Activated CD4-positive, alpha-beta memory T cell treated with anti-CD3 and anti-CD28 coated beads, Interleukin-2, amount 10 ng/mL, durations not matched to agents 7 days and 5 days (primary cell): ENCODE measurements at regions of chr10 and their contacts with region 1.

Region 1: DNA sequence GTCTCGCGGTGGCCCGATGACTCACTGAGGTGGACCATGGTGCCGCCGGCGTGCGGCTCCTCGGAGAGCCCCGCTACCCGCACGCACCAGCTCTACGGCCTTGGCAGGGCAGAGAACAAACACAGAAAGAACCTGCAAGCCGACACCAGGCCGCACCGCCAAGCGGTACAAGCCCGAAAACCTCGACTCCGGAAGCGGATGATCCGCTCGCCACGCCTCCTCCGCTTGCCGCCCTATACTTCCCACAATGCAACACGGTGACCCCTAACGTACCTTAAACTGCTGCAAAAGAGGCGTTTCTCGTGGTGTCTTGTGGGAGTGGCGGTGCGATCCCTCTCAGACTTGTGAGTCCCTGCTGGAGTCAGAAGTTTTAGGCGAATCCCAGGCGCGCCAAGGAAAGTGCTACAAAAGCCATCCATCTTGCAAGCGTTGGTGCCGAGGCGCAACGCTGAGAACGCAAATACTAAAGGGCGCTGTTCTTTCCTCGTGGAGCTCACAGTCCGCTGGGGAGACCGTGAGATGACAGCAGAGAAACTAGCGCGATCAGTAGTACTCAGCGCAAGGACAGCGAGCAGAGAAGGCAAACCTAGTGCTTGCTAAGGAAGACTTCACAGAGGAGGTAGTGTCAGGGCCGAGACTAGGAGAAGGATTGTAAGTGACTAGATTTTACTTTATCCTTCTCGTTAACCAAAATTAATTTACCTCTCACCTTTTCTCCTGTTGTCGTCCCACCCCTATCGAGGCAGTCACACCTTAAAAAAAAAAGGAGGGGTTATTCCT is at the start of gene MRPS16:
- DNase-seq: peak; percentile 95
- H3K4me3 Mint-ChIP-seq: peak within 1 kb of the TSS; percentile 99
- H3K27ac Mint-ChIP-seq: peak within 1 kb of the TSS; percentile 95
- H3K4me1 Mint-ChIP-seq: peaks cover 51% of the 10 kb centered on the region
- H3K27me3 Mint-ChIP-seq: no peaks in the 10 kb centered on the region
- total RNA-seq, gene MRPS16: 77.5 to 80.8 TPM

Region 2: DNA sequence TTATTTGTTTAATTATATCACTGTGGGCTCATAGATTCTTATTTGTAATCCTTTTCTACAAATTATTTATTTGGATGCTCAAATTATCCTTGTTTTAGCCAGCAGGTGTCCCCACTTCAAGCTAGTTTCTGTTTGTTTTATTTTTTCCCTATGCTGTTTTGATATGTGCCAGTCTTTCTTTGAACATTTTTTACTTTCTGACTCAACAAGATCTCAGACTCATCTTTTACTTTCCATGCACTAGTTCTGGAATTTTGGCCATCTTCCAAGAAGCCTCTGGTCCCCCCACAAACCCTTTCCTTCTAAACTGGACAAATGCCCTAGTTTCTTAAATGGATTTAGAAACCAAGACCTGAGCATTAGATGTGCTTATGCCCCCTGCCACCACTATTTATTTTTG is 11.3 kb after region 1 on chr10:
- CTCF ChIA-PET with region 1: interaction called, 16 read pairs
- POLR2A ChIA-PET with region 1: interaction called, 13 read pairs
- DNase-seq: no peak
- H3K4me3 Mint-ChIP-seq: no peak overlapping the region
- H3K27ac Mint-ChIP-seq: no peak overlapping the region
- H3K4me1 Mint-ChIP-seq: peaks cover 9% of the 10 kb centered on the region
- H3K27me3 Mint-ChIP-seq: no peaks in the 10 kb centered on the region

Region 3: DNA sequence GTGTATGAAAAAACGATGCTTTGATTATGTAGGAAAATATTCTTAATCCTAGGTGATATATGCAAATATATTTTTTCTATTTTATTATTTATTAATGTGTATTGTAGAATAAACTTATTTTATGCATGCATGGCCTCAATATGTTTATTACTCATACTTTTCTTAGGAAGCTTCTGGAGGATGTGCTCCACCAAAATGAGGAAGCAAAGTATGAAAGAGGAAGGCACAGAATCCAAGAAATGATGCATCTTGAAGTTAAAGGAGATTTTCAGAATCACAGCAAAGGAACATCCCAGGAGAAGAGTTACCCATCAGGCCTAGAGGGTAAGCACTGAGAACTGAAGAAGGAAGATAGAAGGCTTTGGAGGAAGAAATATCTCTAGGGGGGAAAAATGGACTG is 34.8 kb after region 1 on chr10:
- CTCF ChIA-PET with region 1: no interaction called
- POLR2A ChIA-PET with region 1: no interaction called
- DNase-seq: no peak
- H3K4me3 Mint-ChIP-seq: no peak overlapping the region
- H3K27ac Mint-ChIP-seq: no peak overlapping the region
- H3K4me1 Mint-ChIP-seq: no peaks in the 10 kb centered on the region
- H3K27me3 Mint-ChIP-seq: no peaks in the 10 kb centered on the region

Region 4: GRCh38 chr10:73358331-73359279 is 106.0 kb after region 1 on chr10 and contains the start of gene CFAP70:
- CTCF ChIA-PET with region 1: no interaction called
- POLR2A ChIA-PET with region 1: interaction called, 13 read pairs
- DNase-seq: peak; percentile 95
- H3K4me3 Mint-ChIP-seq: peak within 1 kb of the TSS; percentile 93
- H3K27ac Mint-ChIP-seq: peak within 1 kb of the TSS; percentile 71
- H3K4me1 Mint-ChIP-seq: peaks cover 21% of the 10 kb centered on the region
- H3K27me3 Mint-ChIP-seq: peaks cover 11% of the 10 kb centered on the region
- total RNA-seq, gene CFAP70: 0.28 to 0.70 TPM

Region 5: DNA sequence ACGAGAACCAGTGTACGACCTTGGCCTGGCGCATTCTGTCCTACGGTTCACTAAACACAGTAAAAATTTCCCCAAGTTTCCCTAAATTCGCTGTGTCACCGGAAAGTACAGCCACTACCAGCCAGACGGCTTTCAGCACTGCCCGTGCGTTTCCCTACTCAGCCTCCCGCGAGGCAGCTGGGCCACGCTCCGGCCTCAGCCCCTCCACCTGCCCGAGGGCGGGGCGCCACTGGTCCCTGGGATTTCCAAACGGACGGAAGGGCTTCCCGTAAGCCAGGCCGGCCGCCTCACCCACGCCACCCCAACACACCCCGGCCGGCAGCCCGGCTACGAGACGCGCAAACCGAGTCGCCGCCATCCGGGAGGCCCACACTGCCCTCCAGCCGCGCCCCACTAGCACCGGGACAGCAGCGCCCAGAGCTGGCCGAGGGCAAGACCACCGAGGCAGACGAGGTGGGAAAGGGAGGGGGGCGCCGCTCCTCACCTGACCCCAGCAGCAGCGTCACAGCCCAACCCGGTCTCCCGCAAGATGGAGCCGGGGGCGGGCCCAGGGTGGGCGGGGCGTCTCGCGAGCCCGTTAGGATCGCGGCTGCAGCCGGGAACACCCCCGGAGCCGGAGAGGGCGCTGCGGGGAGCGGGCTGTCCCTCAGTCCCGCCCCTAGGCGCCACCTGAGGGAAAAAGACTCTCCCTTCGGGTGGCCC is 161.0 kb after region 1 on chr10 and contains the start of gene ANXA7:
- CTCF ChIA-PET with region 1: interaction called, 3 read pairs
- POLR2A ChIA-PET with region 1: interaction called, 23 read pairs
- DNase-seq: peak; percentile 95
- H3K4me3 Mint-ChIP-seq: peak within 1 kb of the TSS; percentile 84
- H3K27ac Mint-ChIP-seq: peak within 1 kb of the TSS; percentile 83
- H3K4me1 Mint-ChIP-seq: peaks cover 53% of the 10 kb centered on the region
- H3K27me3 Mint-ChIP-seq: peaks cover 3% of the 10 kb centered on the region
- total RNA-seq, gene ANXA7: 98.7 to 107 TPM

Region 6: DNA sequence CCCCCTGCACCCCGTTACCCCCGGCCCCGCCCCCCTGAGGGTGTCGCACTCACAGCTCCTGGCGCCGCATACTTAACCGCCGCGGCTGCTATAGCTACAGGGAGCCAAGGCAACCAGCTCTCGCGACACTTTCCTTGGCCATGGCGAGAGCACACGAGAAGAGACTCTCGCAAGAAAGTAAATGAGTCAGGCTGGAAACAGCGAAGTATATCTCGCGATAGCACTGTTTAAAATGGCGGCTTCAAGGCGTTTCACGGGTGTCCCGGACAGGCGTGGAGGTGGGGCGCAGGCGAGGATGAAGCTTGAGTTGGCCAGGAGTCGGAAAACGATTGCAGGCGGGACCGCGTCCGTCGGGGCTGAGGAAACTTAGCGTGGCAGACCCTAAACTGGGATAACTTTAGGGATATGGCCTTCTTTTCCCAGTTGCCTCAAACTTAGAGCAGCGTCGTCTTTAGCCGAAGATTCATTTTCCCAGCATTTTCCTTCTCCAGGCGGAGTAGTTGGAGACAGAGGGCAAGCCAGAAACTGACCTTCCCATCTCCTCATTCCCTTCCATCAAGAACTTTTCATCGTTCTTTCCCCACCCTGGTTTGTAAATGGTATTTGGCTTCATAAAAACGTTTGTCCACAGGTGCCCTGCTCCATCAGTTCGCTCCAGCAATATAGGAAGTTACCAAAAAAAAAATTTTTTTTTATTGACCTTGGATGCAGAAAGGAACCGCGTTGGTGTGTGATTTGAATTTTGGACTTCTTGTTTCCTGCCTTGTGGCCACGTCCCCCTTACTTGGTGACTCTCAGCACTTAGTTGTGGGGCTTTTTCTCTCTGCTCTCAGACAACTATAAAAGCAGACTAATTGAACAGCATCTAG is 373.5 kb after region 1 on chr10:
- CTCF ChIA-PET with region 1: no interaction called
- POLR2A ChIA-PET with region 1: interaction called, 10 read pairs
- DNase-seq: peak; percentile 96
- H3K4me3 Mint-ChIP-seq: peak overlapping the region; percentile 98
- H3K27ac Mint-ChIP-seq: peak overlapping the region; percentile 91
- H3K4me1 Mint-ChIP-seq: peaks cover 27% of the 10 kb centered on the region
- H3K27me3 Mint-ChIP-seq: no peaks in the 10 kb centered on the region

Region 7: GRCh38 chr10:73717556-73717955 is 464.9 kb after region 1 on chr10:
- CTCF ChIA-PET with region 1: no interaction called
- POLR2A ChIA-PET with region 1: no interaction called
- DNase-seq: no peak
- H3K4me3 Mint-ChIP-seq: no peak overlapping the region
- H3K27ac Mint-ChIP-seq: no peak overlapping the region
- H3K4me1 Mint-ChIP-seq: no peaks in the 10 kb centered on the region
- H3K27me3 Mint-ChIP-seq: no peaks in the 10 kb centered on the region